GM12878 (cell line): ENCODE measurements at regions of chr12 and their contacts with region 1.

Region 1: DNA sequence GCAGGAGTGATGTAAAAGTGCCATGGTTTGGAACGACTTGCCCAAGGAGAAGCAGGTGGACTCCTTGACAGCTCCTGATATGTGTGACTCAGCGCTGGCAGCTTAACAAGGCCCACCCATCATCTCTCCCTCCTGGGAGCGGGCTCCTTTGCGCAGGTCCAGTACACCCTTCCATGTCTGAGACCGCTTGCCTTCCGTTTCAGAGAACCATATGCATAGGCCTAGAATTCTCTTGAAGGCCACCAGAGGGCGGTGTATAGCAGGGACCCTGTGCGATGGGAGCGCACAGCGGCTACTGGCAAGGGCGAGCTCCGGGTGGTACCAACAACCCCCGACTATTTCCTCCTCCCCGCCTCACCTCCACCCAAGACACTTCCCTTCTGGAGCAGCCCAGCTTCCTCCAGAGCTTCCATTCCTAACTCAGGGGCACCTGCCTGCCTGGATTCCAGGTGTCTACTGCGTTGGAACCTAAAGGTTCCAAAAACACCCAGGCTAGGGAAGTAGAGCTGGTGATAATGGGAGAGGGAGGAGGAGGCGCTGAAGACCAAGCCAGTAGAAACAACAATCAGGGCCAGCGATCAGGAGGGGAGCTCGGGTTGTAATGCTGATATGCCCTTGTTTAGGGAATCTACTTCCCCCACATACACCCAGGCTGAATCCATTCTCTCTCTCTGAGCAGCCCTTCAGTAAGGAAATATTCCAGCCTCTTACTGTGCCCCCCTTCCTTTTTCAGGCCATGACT is 6.2 kb downstream of the DHH start:
- DNase-seq: peak; percentile 44
- ATAC-seq: peak; percentile 96
- H3K4me3 ChIP-seq: 0 out of 2 replicates have a peak overlapping the region, but pooled peaks have one; percentile 5
- H3K27ac ChIP-seq: no peak overlapping the region
- H3K4me1 ChIP-seq: peaks cover 3% of the 10 kb centered on the region; the same call in 1 of the 2 replicates
- H3K27me3 ChIP-seq: peaks cover 27 to 35% of the 10 kb centered on the region in 2 experiments; a peak in 3 of 4 replicates
- CTCF ChIP-seq: peak; percentile 92 to 95 (median 94)
- EP300 ChIP-seq: no peak
- POLR2A ChIP-seq: peak; percentile 31; the same call in 1 of the 2 replicates
- RAD21 ChIP-seq: peak; percentile 76

Region 2: DNA sequence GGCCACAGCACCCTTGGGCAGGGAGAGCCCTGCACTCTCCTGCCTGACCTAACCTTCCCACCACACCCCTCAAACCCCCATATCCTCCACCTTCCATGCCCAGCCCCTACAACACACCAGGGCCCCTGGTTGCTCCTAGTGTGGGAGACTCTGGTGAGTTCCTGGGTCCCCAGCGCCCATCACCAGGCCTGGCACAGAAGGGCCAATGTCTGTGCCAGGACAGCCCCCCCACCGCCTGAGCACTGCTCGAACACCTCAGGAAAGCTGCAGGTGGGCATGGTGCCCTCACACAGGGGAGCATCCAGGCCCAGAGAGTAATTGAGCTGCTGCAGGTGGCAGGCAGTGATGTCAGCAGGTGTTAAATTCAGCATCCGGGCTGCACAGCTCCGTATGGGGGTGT is 314.7 kb before region 1 on chr12:
- CTCF ChIA-PET with region 1: no interaction called
- POLR2A ChIA-PET with region 1: no interaction called
- RAD21 ChIA-PET with region 1: no interaction called
- SMC1A ChIA-PET with region 1: no interaction called
- in situ Hi-C with region 1: no loop called
- intact Hi-C with region 1: no loop called
- DNase-seq: no peak
- ATAC-seq: no peak
- H3K4me3 ChIP-seq: no peak overlapping the region
- H3K27ac ChIP-seq: no peak overlapping the region
- H3K4me1 ChIP-seq: peaks cover 4% of the 10 kb centered on the region
- H3K27me3 ChIP-seq: no peaks in the 10 kb centered on the region
- CTCF ChIP-seq: no peak
- EP300 ChIP-seq: no peak
- POLR2A ChIP-seq: no peak
- RAD21 ChIP-seq: no peak

Region 3: GRCh38 chr12:49069507-49070346 is 18.6 kb before region 1 on chr12 and contains the start of gene RHEBL1:
- CTCF ChIA-PET with region 1: interaction called, 254 read pairs
- POLR2A ChIA-PET with region 1: interaction called, 7 read pairs
- RAD21 ChIA-PET with region 1: interaction called, 66 read pairs
- SMC1A ChIA-PET with region 1: interaction called, 82 read pairs
- in situ Hi-C with region 1: no loop called
- intact Hi-C with region 1: loop called (anchors 2 kb)
- DNase-seq: peak; percentile 94
- ATAC-seq: peak; percentile 99
- H3K4me3 ChIP-seq: peak within 1 kb of the TSS; percentile 93
- H3K27ac ChIP-seq: peak within 1 kb of the TSS; percentile 91
- H3K4me1 ChIP-seq: peaks cover 4% of the 10 kb centered on the region
- H3K27me3 ChIP-seq: no peaks in the 10 kb centered on the region
- CTCF ChIP-seq: peak; percentile 33 to 37 (median 36); a peak in 4 of 6 replicates
- EP300 ChIP-seq: peak in 1 of 2 experiments; percentile 30; a peak in 1 of 4 replicates
- POLR2A ChIP-seq: peak; percentile 79
- RAD21 ChIP-seq: no peak
- polyA plus RNA-seq, gene RHEBL1: 17.9 to 18.7 TPM

Region 4: DNA sequence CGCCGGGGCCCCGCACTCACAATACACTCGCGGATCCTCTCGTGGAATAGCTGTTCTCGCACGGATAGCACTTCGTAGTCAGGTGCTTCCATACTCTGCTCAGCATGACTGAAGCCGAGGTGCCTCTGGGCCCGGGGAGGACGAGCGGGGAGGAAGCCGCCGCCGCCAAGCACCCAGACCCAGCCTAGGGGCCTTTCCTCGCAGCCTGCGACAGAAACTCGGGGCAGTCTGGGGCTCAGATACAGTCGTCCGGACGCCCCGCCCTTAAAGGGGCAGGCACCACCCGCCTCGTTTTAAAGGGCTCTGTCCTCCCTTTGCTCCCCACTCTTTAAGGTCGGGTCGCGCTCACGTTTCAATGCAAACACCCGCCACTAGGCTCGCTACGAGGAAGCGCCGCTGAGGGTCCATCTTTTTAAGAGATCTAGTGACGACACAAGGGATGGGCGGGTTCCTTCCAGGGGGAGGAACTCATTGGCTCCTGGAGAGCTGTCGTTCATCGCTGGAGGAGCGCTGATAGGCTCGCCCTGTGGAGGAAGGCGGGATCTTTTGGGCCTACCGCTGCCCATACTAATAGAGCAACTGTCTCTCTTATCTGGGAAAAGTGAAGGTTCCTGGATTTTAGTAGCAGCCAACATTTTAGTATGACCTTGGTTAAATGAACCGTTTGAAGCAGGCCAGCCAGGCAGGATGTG is 22.2 kb after region 1 on chr12 and contains the start of gene LMBR1L:
- CTCF ChIA-PET with region 1: interaction called, 118 read pairs
- POLR2A ChIA-PET with region 1: interaction called, 9 read pairs
- RAD21 ChIA-PET with region 1: interaction called, 5 read pairs
- SMC1A ChIA-PET with region 1: interaction called, 5 read pairs
- in situ Hi-C with region 1: no loop called
- intact Hi-C with region 1: no loop called
- DNase-seq: peak; percentile 93
- ATAC-seq: peak; percentile 98
- H3K4me3 ChIP-seq: peak within 1 kb of the TSS; percentile 87
- H3K27ac ChIP-seq: peak within 1 kb of the TSS; percentile 70
- H3K4me1 ChIP-seq: peaks cover 9% of the 10 kb centered on the region
- H3K27me3 ChIP-seq: no peaks in the 10 kb centered on the region
- CTCF ChIP-seq: peak; percentile 36 to 60 (median 50); a peak in 5 of 6 replicates
- EP300 ChIP-seq: no peak
- POLR2A ChIP-seq: peak; percentile 91
- RAD21 ChIP-seq: 0 out of 2 replicates have a peak, but pooled peaks have one; percentile 32
- polyA plus RNA-seq, gene LMBR1L: 2.1 to 2.8 TPM

Region 5: GRCh38 chr12:49121047-49121696 is 32.8 kb after region 1 on chr12:
- CTCF ChIA-PET with region 1: interaction called, 18 read pairs
- POLR2A ChIA-PET with region 1: interaction called, 7 read pairs
- RAD21 ChIA-PET with region 1: interaction called, 7 read pairs
- SMC1A ChIA-PET with region 1: interaction called, 6 read pairs
- in situ Hi-C with region 1: no loop called
- intact Hi-C with region 1: no loop called
- DNase-seq: no peak
- ATAC-seq: peak; percentile 52
- H3K4me3 ChIP-seq: no peak overlapping the region
- H3K27ac ChIP-seq: no peak overlapping the region
- H3K4me1 ChIP-seq: no peaks in the 10 kb centered on the region
- H3K27me3 ChIP-seq: no peaks in the 10 kb centered on the region
- CTCF ChIP-seq: peak; percentile 25 to 61 (median 36); a peak in 4 of 6 replicates
- EP300 ChIP-seq: no peak
- POLR2A ChIP-seq: no peak
- RAD21 ChIP-seq: peak; percentile 49

Region 6: GRCh38 chr12:49244176-49244575 is 155.8 kb after region 1 on chr12:
- CTCF ChIA-PET with region 1: interaction called, 10 read pairs
- POLR2A ChIA-PET with region 1: interaction called, 3 read pairs
- RAD21 ChIA-PET with region 1: interaction called, 3 read pairs
- SMC1A ChIA-PET with region 1: interaction called, 3 read pairs
- in situ Hi-C with region 1: no loop called
- intact Hi-C with region 1: no loop called
- DNase-seq: no peak
- ATAC-seq: no peak
- H3K4me3 ChIP-seq: no peak overlapping the region
- H3K27ac ChIP-seq: no peak overlapping the region
- H3K4me1 ChIP-seq: no peaks in the 10 kb centered on the region
- H3K27me3 ChIP-seq: no peaks in the 10 kb centered on the region
- CTCF ChIP-seq: no peak
- EP300 ChIP-seq: no peak
- POLR2A ChIP-seq: no peak
- RAD21 ChIP-seq: no peak